ENCODE measurements at regions of chr15 and their contacts with region 1.

Region 1: DNA sequence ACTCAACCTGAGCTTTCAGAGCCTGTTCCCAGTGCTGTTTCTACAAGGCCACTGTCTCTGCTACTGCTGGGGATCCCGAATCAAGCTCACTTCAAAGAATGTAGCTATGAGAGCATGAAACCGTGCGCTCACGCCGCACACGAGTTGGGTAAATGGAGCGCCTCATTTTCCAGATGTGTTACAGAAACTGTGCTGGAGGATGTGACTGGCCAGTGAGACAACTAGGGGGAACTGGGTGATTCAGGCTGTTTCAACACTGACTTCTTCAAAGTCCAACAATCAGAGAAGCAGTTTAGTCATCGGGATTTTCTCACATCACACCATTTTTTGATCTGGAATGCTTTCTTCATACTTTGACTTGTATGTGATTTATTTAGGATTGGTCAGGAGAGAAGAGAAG is 3.5 kb downstream of the ZNF710 start:
- DNase-seq: no peak
- ATAC-seq: peak; percentile 29

Region 2: GRCh38 chr15:89967881-89968280 is 36.8 kb before region 1 on chr15:
- intact Hi-C with region 1: loop called (anchors 1 kb)
- DNase-seq: no peak
- ATAC-seq: no peak

Region 3: DNA sequence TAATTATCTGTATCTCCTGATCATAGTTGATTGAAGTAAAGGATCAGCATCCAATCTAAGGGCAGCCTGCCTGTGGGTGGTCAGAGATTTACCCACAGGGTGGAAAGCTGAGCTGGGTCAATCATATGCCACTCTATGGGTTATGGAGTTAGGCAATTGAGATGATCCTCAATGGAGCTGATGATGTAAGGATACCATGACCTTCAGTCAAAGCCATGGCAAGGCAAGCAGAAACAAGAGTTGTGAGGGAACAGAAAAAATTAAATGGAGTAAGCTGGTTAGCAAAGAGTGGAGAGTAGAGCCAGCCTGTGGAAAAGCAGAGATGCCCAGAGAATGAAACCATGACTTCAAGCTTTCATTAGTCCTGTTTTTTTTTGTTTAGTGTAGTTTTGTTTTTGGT is 377.6 kb after region 1 on chr15:
- intact Hi-C with region 1: no loop called
- DNase-seq: no peak
- ATAC-seq: no peak

Measured in sciatic nerve (tissue), 2 donors.